AG04450 (cell line): ENCODE measurements at regions of chr1 and their contacts with region 1.

Region 1: DNA sequence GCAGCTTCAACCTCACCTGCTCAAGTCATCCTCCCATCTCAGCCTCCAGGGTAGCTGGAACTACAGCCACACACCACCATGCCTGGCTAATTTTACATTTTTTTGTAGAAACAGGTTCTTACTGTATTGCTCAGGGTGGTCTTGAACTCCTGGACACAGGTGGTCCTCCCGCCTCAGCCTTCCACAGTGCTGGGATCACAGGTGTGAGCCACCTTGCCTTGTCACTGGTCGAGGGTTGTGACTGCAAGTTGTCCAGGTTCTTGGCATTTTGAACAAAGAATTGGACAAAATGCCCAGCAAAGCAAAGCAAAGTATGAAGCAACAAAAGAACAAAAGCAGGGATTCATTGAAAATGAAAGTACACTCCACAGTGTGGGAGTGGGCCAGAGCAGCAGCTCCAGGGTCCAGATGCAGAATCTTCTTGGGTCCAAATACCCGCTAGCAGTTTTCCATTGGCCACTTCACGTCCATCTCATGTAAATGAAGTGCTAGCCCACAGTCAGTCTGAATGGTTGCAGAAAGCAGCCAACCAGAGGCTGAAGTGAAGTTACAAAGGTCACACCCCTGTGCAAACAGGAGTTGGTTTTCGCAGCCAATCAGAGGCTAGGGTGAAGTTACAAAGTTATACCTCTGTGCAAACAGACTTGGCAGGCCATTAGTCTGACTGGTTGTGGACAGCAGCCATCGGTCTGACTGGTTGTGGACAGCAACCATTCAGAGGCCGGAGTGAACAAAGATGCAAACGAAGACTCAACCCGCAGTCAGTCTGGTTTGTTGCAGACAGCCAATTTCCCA is 109.5 kb upstream of the KIF26B start:
- DNase-seq: no peak
- H3K4me3 ChIP-seq: no peak overlapping the region
- H3K27ac ChIP-seq: peak overlapping the region; percentile 2
- H3K27me3 ChIP-seq: no peaks in the 10 kb centered on the region
- CTCF ChIP-seq: no peak

Region 2: DNA sequence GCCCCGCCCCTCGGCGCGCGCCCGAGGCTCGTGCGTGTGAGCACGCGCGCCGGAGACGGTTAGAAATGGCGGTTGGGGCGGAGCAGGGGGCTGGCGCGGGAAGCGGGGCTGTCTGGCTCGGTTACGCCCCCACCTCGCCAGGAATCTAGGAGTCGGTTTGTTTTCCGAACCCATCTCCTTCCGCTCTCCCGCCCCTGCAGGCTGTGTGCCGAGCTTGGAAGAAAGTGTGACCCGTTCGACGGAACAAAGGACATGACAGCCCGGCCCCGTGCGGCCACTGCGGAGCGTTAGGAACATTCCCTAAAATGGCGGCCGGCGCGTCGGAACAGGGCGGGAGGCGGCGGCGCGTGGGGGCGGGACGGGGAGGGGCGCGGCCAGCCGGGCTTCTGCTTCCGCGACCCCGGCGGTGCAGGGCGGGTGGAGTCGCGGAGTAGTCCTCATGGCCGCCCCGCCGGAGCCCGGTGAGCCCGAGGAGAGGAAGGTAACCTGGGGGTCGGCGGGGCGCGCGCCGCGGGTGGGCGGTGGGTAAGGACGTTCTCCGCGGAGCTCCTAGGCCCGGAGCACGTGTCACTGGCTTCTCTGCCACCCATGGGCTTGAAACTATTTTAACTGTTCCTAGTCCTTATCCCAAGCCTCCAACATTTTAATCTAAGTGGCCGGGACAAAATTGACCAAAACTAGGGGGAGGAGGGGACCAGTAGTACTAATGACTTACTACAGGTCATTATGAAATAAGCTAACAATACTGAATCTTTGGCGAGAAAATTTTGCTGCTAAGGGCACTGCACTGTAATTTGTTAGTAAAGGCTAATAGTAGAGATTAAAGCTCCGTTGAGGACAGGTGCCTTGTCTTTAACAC is 209.8 kb before region 1 on chr1 and contains the start of gene COX20:
- CTCF ChIA-PET with region 1: interaction called, 33 read pairs
- POLR2A ChIA-PET with region 1: interaction called, 6 read pairs
- DNase-seq: peak; percentile 72
- H3K4me3 ChIP-seq: peak within 1 kb of the TSS; percentile 65
- H3K27ac ChIP-seq: peak within 1 kb of the TSS; percentile 99
- H3K27me3 ChIP-seq: no peaks in the 10 kb centered on the region
- CTCF ChIP-seq: no peak
- polyA plus RNA-seq, gene COX20: 25.4 and 45.8 TPM in 2 replicates

Region 3: DNA sequence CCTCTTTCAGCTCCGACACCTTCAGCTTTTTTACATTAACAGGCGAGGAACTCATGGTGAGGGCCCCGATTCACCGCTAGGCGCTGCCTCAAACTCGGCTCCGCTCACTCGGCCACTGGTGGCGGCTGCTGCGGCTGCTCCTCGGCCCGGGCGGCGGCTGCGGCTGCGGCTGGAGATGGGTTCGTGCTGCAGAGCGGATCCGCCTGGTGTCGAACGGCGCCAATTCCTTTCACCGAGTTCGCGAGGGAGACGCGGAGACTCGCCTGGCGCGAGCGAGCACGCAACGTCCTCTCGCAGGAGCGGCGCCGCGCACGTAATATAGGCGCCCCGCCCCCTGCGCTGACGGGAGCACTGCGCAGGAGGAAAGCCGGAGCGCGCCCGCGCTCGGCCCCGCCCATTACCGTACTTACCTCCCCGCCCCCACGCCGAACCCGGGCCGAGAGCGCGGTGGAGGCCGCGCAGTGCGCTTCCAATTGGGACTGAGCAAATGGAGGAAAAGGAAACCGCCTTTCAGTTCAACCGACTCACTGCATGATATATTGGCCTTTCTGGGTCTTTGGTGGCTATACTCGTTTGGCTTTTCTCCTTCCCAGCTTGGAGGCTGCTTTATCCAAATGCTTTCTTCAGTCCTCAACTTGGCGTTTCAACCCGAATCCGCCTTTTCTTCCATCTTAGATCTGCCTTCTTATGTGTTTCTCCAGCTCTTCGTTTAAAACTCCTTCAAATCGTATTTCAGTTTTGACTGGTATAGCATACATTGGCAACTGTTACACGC is 180.8 kb before region 1 on chr1 and contains the start of gene HNRNPU:
- CTCF ChIA-PET with region 1: interaction called, 65 read pairs
- POLR2A ChIA-PET with region 1: interaction called, 13 read pairs
- DNase-seq: peak; percentile 94
- H3K4me3 ChIP-seq: peak within 1 kb of the TSS; percentile 88
- H3K27ac ChIP-seq: peak within 1 kb of the TSS; percentile 93
- H3K27me3 ChIP-seq: no peaks in the 10 kb centered on the region
- CTCF ChIP-seq: peak; percentile 42; the same call in 1 of the 2 replicates
- polyA plus RNA-seq, gene HNRNPU: 205 and 262 TPM in 2 replicates

Region 4: GRCh38 chr1:245014247-245015029 is 30.8 kb before region 1 on chr1:
- CTCF ChIA-PET with region 1: interaction called, 34 read pairs
- POLR2A ChIA-PET with region 1: no interaction called
- DNase-seq: no peak
- H3K4me3 ChIP-seq: no peak overlapping the region
- H3K27ac ChIP-seq: no peak overlapping the region
- H3K27me3 ChIP-seq: no peaks in the 10 kb centered on the region
- CTCF ChIP-seq: no peak

Region 5: DNA sequence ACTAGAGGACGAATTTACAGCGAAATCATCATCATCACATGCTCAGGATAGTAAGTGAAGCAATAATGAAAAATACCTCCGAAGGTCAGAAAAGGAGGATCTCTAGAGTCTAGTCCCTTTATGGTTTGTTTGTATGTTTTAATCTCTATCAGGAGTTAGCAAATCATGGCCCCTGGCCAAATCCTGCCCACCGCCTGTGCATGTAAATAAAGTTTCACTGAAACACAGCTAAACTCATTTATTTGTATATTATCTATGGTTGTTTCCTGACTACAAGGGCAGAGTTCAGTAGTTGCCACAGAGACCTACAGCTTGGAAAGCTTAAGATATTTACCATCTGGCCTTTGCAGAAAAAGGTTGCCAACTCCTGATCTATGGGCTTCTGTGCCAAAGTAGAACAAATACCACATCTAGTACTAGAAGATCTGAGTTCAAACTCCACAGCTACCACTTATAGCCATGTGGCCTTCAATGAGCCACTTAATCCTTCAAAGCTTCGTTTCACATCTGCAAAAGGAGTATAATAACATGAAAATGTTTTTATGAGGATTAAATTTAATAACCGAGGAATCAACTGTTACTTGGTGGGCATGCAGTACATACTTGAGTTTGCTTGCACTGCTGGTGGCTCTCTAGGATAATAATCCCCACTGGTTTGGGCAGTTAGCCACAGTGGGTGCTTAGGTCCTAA is 15.5 kb after region 1 on chr1:
- CTCF ChIA-PET with region 1: interaction called, 45 read pairs
- POLR2A ChIA-PET with region 1: interaction called, 5 read pairs
- DNase-seq: no peak
- H3K4me3 ChIP-seq: no peak overlapping the region
- H3K27ac ChIP-seq: no peak overlapping the region
- H3K27me3 ChIP-seq: no peaks in the 10 kb centered on the region
- CTCF ChIP-seq: no peak